Right ventricle myocardium inferior (tissue), 1 donor: ENCODE measurements at regions of chr10 and their contacts with region 1.

Region 1: GRCh38 chr10:3785257-3785850 is 345 bp upstream of the KLF6 start:
- DNase-seq: peak; percentile 99
- ATAC-seq: peak; percentile 85

Region 2: DNA sequence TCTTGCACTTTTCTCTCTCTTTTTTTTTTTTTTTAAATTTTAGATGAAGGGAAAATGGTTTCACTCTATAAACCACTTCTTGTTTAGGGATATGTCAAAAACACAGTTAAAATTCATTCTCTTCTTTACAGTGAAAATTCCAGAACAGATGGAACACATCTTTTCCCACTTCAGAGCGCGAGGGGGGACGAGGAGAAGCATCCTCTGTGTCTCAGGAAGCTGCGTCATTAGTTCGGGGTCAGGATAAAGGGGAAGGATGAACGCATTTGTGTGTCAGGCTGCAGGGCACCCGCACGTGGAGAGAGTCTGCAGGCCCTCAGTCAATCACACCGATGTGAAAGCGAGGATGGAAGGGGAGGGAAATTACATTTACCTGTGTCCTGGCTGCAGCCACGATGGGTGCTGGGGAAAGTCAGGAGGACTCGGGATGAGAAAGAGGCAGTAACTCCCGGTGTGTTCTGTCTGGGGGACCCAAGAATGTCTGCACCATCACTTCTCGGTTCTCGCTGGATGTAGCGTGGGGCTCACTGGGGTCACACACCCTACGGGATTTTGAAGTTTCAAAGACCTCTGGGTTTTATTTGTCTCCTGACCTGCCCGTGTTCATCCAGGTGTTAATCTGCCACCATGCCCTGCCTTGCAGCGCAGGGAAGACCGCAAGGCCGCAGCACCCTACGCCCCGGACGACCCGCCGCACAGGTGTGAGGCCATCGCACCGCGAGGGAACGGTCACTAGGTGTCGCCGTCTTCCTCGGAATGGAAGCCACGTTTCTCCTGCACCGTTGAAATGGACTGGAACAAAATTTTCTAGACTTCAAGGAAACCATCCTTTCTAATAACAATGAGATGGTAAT is 546.1 kb before region 1 on chr10:
- intact Hi-C with region 1: loop called (anchors 2 kb)
- DNase-seq: peak; percentile 89
- ATAC-seq: peak; percentile 77

Region 3: GRCh38 chr10:3570855-3571266 is 214.5 kb before region 1 on chr10:
- intact Hi-C with region 1: loop called (anchors 5 kb)
- DNase-seq: no peak
- ATAC-seq: peak; percentile 41

Region 4: DNA sequence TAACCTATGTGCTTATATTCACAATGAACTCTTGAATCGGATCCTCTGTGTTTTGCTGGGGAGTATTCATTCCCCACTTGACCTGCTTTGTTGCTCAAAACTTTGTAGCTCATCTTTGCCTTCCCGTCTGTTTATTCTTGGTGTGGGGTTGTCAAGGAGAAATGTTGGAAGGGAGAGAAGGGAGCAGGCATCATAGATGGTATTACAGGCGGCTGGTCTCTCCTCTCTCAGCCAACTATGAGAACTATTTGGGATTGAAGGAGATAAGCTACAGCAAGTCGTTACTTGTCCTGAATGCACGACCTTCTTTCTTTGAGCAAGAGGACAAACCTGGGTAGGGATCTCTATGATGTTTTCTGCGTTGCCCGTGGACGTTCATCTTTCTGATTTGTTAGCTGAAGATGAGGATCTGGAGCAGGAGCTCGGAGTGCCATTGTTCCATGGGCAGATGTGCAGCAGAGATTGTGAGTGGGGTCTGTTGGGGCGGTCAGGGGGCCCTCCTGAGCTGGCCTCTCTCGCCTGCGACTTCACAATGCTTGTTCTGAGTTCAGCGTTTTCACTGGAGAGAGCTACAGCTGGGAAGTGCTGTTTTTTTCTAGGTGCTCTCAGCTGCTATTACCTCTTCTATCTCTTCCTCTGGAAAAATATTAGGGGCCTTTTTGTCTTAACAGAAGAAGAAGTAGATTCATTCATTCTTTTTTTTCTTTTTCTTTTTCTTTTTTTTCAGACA is 126.5 kb after region 1 on chr10:
- intact Hi-C with region 1: loop called (anchors 2 kb)
- DNase-seq: no peak
- ATAC-seq: peak; percentile 88

Region 5: GRCh38 chr10:3995302-3996210 is 210.2 kb after region 1 on chr10:
- intact Hi-C with region 1: no loop called
- DNase-seq: no peak
- ATAC-seq: no peak

Region 6: GRCh38 chr10:4498711-4499251 is 713.4 kb after region 1 on chr10:
- intact Hi-C with region 1: loop called (anchors 5 kb)
- DNase-seq: no peak
- ATAC-seq: peak; percentile 80

Region 7: GRCh38 chr10:4663162-4663904 is 878.0 kb after region 1 on chr10:
- intact Hi-C with region 1: loop called (anchors 1 kb)
- DNase-seq: no peak
- ATAC-seq: peak; percentile 88